Dendritic cell treated with granulocyte-macrophage colony-stimulating factor and Interleukin-4, amounts not matched to agents 40 ng/mL and 50 ng/mL, for 4 days (primary cell): ENCODE measurements at regions of chr5 and their contacts with region 1.

Region 1: DNA sequence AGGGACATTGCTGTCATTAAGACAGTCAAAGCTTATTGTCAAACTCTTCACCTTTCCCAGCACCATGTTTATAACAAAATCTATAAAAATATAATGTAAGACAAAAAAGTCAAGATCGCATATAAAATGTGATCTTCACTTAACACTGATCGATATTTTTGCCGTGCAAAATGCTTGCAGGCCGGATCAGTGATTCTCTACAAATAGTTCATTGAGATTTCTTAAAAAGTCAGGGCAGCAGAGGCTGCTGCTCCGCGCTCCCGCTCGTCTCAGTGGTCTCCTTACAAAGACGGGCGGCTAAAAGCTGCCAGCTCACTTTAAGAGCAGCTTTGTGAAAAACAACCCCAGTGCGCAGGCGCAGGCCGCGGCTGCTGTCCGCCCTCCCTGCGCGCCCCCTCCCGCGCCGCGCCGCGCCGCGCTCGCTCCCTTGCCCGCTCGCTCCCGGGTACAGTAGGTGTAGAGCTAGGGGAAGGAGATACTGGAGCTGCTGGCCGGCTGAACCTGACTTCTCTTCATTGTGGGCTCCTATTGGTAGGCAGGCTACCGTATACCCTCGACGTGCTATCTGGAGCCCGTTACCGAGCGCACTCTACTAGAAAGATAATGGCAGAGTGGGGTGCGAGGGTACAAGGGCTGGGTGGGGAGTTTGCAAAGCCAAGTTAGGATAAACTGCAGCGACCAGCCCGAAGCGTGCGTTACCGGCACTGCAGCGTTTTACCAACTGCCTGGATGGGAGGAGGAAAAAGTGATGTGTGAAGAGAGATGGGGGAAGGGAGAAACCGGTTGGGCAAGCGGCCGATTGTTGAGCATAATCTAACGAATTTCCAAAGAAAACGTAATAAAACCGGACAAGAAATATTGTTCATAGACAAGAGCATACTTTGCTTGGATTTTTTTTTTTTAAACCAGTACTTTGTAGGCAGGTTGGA is at the start of gene ARRDC3:
- H3K4me3 Mint-ChIP-seq: peak within 1 kb of the TSS; percentile 94
- H3K27ac Mint-ChIP-seq: peak within 1 kb of the TSS; percentile 98
- H3K4me1 Mint-ChIP-seq: peaks cover 15% of the 10 kb centered on the region
- H3K27me3 Mint-ChIP-seq: no peaks in the 10 kb centered on the region

Region 2: GRCh38 chr5:90932052-90932699 is 451.1 kb before region 1 on chr5:
- intact Hi-C with region 1: loop called (anchors 10 kb)
- H3K4me3 Mint-ChIP-seq: no peak overlapping the region
- H3K27ac Mint-ChIP-seq: no peak overlapping the region
- H3K4me1 Mint-ChIP-seq: no peaks in the 10 kb centered on the region
- H3K27me3 Mint-ChIP-seq: peaks cover 3% of the 10 kb centered on the region

Region 3: GRCh38 chr5:91162534-91163381 is 220.5 kb before region 1 on chr5:
- intact Hi-C with region 1: loop called (anchors 5 kb)
- H3K4me3 Mint-ChIP-seq: no peak overlapping the region
- H3K27ac Mint-ChIP-seq: peak overlapping the region; percentile 86
- H3K4me1 Mint-ChIP-seq: peaks cover 29% of the 10 kb centered on the region
- H3K27me3 Mint-ChIP-seq: no peaks in the 10 kb centered on the region

Region 4: DNA sequence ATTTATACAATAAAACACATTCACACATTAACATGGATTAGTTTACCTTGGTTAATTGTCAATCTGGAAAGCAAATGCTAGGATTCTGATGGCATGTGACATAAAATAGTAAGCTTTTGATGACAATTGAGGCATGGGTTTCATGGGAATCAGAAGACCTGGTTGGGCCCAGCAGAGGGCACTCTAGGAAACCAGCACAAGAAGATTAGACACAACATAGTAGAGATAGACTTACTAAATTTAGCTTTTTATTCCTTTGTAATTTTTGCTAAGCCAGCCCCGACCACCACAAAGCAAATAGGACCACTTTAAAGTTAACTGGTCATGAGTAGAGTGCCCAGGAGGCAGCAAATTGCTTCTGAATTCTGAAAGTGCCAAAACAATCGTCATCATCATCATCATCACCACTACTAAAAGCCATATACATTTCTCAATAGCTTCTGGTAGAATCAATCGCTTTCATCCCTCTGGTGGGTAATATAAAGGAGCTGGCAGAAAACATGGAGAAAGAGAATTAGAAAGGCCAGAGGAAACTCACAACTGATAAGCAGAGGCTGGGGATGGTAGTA is 163.4 kb before region 1 on chr5:
- intact Hi-C with region 1: loop called (anchors 10 kb)
- H3K4me3 Mint-ChIP-seq: no peak overlapping the region
- H3K27ac Mint-ChIP-seq: peak overlapping the region; percentile 84
- H3K4me1 Mint-ChIP-seq: peaks cover 29% of the 10 kb centered on the region
- H3K27me3 Mint-ChIP-seq: no peaks in the 10 kb centered on the region

Region 5: DNA sequence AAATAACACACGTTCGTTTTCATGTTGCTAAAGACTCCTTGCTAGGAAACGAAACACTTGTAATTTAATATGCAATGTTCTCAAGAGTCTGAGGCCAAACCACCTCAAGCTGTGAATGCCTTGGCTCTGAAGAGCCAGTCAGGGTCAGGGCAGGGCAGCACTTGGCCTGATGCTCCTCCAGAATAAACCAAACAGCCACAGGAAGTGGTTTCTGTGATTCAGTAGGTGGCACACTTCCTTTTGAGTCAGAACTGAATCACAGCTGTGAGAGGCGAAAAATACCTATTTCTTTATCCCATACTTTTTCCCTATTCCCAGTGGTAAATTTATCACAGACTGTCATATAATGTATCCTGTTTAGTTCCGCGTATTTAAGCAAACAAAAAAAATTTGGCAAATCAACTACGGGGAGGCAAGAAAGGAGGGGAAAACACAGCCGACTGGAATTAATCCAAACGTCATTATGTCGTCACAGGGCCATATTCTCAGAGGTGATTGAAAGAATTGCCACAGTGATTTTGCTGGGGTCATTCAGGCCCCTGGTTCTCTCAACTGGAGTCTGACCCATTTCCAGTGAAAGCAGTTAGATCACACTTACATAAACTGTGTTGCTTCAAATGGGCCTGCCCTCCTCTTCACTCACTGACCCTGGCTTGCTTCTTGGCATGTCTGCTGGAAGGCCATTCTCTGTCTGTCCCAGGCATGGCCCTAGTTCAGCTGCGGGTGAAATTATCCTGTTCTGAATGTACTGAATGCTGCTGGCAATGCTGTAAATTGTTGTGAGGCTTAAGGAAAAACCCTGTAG is 71.4 kb before region 1 on chr5:
- intact Hi-C with region 1: loop called (anchors 2 kb)
- H3K4me3 Mint-ChIP-seq: peak overlapping the region; percentile 42
- H3K27ac Mint-ChIP-seq: peak overlapping the region; percentile 94
- H3K4me1 Mint-ChIP-seq: peaks cover 57% of the 10 kb centered on the region
- H3K27me3 Mint-ChIP-seq: no peaks in the 10 kb centered on the region